BJ (cell line): ENCODE measurements at regions of chr3 and their contacts with region 1.

Region 1: DNA sequence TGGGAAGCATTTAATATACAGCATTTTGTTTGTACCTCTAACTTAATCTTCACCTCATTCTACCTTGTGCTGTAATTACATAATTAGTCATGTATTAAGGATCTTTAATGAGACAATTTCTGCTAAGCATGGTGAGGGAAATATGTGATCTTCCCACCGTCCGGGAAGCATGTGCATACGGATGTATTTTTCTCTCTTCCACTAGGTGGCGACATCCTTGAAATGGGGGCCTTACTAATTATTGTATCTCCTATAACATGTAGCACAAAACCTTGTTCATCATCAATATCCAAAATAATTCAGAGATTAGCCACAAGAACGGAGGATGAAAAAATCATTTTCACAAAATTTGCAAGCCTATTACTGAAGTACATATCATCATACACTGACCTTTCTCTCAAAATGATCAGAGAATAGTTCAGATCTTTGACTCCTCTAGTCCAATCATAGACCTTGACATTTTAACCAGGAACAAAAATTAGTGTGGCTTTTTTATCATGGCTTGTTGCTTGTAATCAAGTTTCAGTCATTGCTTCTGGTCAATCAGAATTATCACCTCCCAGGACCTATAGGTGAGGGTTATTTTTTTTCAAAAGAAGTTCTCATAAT is 148.9 kb upstream of the GBE1 start:
- DNase-seq: no peak
- H3K4me3 ChIP-seq: no peak overlapping the region
- H3K27me3 ChIP-seq: no peaks in the 10 kb centered on the region
- CTCF ChIP-seq: peak; percentile 83

Region 2: DNA sequence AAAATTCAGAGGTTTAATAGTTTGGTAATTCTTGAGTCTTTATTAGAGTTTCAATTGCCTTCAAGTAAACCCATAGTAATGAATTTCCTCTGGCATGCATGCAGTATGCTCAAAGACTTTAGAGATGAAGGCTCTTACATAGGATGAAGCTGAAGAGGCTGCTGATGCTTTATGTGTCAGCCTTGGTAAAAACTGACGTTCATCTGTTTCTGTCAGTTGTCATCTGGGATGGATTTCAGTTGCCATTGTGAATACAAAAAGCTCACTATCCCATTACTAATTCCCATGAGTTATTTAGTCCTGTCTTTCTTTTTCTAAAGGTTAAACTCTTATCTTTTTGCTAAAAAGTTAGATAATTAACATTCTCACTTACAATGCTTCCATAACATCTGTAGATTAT is 12.0 kb before region 1 on chr3:
- CTCF ChIA-PET with region 1: interaction called, 12 read pairs
- POLR2A ChIA-PET with region 1: no interaction called
- DNase-seq: no peak
- H3K4me3 ChIP-seq: no peak overlapping the region
- H3K27me3 ChIP-seq: no peaks in the 10 kb centered on the region
- CTCF ChIP-seq: no peak

Region 3: GRCh38 chr3:81920816-81921215 is 10.5 kb after region 1 on chr3:
- CTCF ChIA-PET with region 1: interaction called, 17 read pairs
- POLR2A ChIA-PET with region 1: no interaction called
- DNase-seq: no peak
- H3K4me3 ChIP-seq: no peak overlapping the region
- H3K27me3 ChIP-seq: no peaks in the 10 kb centered on the region
- CTCF ChIP-seq: no peak